Aorta (tissue), 5 donors: ENCODE measurements at regions of chr1 and their contacts with region 1.

Region 1: DNA sequence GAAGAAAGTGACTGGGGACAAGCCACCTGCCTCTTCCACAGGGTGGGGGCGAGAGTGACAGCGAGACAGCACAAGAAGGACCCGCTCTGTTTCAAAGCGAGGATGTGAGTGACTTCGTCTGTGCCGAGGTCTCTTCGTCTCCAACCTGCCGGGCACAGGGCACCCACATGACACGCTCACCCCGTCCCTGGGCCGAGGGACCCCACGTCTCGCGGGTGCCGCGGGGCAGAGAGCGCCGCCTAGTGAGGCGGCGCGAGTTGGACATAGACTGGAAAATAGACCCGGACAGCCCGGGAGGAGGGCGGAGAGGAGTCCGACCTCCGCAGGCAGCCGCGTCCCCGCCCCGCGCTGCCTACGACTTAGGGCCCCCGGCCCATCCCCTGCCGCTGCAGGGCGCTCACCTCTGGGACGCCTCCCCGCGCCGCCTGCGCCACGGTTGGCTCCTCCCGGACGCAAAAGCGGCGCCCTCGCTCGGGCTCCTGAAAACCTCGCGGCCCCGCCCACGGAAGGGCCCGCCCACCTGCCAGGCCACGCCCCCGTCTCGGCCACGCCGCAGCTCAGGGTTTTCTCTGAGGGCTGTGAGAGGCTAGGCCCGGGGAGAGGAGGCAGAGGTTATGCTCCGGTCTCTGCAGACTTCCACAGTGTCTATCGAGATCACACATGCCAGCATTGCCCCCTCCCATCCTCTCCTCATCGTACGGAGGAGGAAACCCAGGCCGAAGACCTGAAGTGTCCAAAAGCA is at the start of gene TLR5:
- DNase-seq: peak; percentile 92 to 96
- ATAC-seq: peak; percentile 94
- H3K4me3 ChIP-seq: peak within 1 kb of the TSS; percentile 21 to 55
- H3K27ac ChIP-seq: no peak within 1 kb of the TSS
- H3K4me1 ChIP-seq: no peaks in the 10 kb centered on the region
- H3K27me3 ChIP-seq: peaks cover 0 to 2% of the 10 kb centered on the region in 2 donors
- total RNA-seq, gene TLR5: 4.9 to 20.9 TPM

Region 2: DNA sequence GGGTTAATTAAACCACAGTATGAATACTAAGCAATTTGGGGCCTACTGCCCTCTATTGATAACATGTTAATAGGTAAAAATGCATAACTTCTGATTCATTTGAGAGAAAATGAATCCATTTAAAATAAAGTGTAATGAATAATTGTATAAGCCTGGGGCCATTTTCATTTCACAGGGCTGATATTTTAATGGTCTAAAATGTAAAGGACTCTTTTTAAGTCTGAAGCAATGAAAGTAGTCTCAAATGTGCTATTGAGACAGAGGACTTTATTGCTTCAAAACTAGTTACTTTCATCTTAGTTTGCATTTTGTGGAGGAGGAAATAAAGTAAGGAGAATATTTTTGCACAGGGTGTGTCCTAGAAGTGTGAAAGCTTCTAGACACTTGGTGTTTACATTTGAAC is 155.3 kb before region 1 on chr1:
- intact Hi-C with region 1: no loop called
- DNase-seq: no peak
- ATAC-seq: no peak
- H3K4me3 ChIP-seq: no peak overlapping the region
- H3K27ac ChIP-seq: no peak overlapping the region
- H3K4me1 ChIP-seq: no peaks in the 10 kb centered on the region
- H3K27me3 ChIP-seq: no peaks in the 10 kb centered on the region

Region 3: DNA sequence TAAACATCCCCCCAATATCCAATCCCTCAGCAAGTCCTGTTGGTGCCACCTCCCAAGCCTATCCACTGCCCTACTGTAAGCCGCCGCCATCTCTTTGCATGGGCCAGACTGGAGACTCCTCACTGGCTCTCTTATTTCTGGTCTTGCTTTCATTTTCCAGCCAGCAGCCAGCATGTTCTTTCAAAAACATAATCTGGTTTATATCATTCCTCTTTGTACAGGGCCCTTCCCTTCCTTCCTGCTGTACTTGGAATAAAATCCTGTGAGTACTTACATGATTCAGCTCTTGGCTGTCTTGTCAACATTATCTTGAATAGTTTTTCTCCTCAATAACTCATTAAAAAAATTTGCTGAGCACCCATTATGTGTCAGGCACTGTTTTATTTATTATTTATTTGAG is 28.1 kb before region 1 on chr1:
- intact Hi-C with region 1: no loop called
- DNase-seq: no peak
- ATAC-seq: peak; percentile 67
- H3K4me3 ChIP-seq: no peak overlapping the region
- H3K27ac ChIP-seq: no peak overlapping the region
- H3K4me1 ChIP-seq: no peaks in the 10 kb centered on the region
- H3K27me3 ChIP-seq: no peaks in the 10 kb centered on the region

Region 4: DNA sequence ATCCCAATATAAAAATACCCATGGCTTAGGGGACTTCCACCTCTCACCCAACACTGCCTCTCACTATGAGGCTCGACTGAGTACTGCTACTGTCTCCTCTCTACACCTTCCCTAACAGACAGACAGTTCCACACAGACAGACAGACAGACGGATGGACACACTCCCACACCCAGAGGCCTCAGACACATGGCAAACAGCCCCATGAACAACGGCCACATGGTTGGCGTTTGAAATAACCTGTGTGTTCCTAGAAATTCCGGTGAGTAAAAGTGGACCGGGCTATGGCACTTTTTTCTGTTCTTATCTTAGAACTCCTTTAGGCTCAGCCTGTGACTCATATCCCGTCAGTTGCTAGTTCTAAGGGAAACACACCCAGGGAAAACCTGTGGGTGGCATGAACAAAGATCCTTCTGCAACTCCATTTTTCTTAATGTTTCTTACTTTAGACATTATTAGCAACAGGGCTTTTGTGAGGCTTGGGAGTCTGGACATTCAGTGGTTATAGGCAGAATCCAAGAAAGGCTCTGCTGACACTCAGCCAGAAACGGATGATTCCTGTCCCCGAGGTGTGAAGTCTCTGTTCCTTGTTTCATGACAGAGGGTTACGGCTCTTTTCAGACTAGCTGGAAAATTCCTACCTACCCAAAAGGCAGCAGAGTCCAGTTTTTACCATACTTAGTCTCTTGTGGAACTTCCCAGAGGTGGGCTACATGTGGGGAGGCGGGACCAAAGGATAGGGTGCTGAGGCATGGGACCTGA is 90.6 kb after region 1 on chr1:
- intact Hi-C with region 1: loop called in 1 of 2 experiments (anchors 5 kb)
- DNase-seq: no peak
- ATAC-seq: peak; percentile 71
- H3K4me3 ChIP-seq: no peak overlapping the region
- H3K27ac ChIP-seq: peak overlapping the region in 1 of 2 donors; percentile 46
- H3K4me1 ChIP-seq: no peaks in the 10 kb centered on the region
- H3K27me3 ChIP-seq: no peaks in the 10 kb centered on the region

Region 5: GRCh38 chr1:223429313-223429731 is 286.4 kb after region 1 on chr1:
- intact Hi-C with region 1: loop called in 1 of 2 experiments (anchors 5 kb)
- DNase-seq: peak in 1 of 2 donors; percentile 81
- ATAC-seq: peak; percentile 83
- H3K4me3 ChIP-seq: no peak overlapping the region
- H3K27ac ChIP-seq: peak overlapping the region; percentile 94 to 96
- H3K4me1 ChIP-seq: peaks cover 0 to 1% of the 10 kb centered on the region in 2 donors
- H3K27me3 ChIP-seq: no peaks in the 10 kb centered on the region